ENCODE measurements at regions of chr9 and their contacts with region 1.

Region 1: DNA sequence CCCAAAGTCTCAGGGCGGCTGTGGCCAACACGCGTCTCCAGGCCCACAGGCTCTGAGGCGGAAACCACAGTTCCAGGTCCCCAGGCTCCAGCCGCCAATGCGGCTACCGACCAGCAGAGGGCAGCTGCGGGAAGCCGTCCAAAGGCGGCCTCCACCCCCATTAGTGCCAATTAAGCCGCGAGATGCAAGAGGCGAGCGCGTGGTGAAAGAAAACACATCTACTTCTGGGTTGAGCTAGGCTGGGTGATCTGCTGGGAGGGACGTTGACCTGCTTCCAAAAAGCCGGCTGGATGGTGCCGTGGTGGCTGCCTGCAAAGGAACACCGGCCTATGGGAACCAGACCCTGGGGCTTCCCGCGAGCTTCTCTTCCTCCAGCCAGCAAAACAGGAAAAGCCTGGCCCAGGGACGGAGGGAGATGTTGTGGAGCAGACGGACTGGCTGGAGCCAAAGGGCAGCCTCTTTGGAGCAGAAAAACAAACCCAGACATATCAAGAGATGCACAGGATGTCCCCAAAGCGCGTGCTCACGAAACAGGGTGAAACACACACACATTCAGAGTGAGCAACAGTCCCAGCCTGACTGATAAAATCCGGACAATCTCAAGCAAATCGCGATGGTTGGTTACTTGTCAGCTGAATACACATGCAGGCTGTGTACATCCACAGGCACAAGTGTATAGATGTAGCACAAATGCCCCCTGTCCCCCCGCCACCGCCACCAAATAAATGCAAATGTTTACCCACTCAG is 187.1 kb upstream of the BRINP1 start:
- DNase-seq: peak; percentile 77
- H3K4me3 ChIP-seq: peak overlapping the region; percentile 14
- H3K27ac ChIP-seq: no peak overlapping the region
- H3K4me1 ChIP-seq: no peaks in the 10 kb centered on the region
- H3K27me3 ChIP-seq: no peaks in the 10 kb centered on the region
- CTCF ChIP-seq: peak; percentile 94

Region 2: DNA sequence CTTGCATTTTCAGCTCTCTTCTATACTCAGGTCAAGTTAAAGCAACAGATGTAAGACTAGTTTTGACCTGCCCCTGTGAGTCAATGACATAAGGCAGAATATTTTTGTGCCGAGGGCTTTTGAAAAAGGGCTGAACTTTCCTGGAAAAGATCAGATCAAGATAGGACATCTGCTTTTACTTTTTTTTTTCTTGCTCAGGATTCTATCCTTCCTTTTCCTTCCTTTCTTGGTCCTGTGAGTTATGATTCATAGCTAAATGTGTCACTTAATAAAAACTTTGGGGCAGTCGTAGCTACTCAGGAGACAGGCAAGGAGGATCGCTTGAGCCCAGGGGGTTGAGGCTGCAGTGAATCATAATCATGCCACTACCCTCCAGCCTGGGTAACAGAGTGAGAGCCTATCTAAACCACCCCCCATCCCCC is 102.8 kb before region 1 on chr9:
- intact Hi-C with region 1: no loop called
- DNase-seq: no peak
- H3K4me3 ChIP-seq: no peak overlapping the region
- H3K27ac ChIP-seq: no peak overlapping the region
- H3K4me1 ChIP-seq: no peaks in the 10 kb centered on the region
- H3K27me3 ChIP-seq: no peaks in the 10 kb centered on the region
- CTCF ChIP-seq: no peak

Region 3: GRCh38 chr9:119667163-119667562 is 110.9 kb after region 1 on chr9:
- intact Hi-C with region 1: no loop called
- DNase-seq: no peak
- H3K4me3 ChIP-seq: no peak overlapping the region
- H3K27ac ChIP-seq: no peak overlapping the region
- H3K4me1 ChIP-seq: no peaks in the 10 kb centered on the region
- H3K27me3 ChIP-seq: no peaks in the 10 kb centered on the region
- CTCF ChIP-seq: no peak

Region 4: DNA sequence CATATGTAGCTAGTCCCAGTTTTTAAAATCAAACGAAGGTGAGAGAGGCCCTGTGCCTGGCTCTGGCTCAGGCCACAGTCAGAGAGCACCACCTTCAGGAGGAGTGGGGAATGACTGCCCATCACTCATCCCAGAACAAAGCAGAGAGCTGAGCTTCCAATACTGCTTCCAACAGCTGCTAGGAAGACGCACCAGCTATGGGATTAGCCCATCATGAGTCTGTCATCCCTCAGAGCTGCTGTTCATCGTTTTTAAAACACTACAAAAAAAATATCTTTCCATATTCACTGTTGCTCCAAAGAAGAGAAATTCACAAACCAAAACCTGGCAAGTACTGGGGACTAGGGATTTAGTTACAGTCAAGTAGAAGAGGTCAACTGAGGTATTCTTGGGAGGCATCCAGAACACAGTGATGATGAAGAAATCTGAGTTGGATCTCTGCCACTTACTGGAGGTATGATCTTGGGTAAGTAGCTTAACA is 921.3 kb after region 1 on chr9:
- intact Hi-C with region 1: loop called (anchors 10 kb)
- DNase-seq: peak; percentile 71
- H3K4me3 ChIP-seq: no peak overlapping the region
- H3K27ac ChIP-seq: no peak overlapping the region
- H3K4me1 ChIP-seq: no peaks in the 10 kb centered on the region
- H3K27me3 ChIP-seq: no peaks in the 10 kb centered on the region
- CTCF ChIP-seq: peak; percentile 92